Breast epithelium (tissue), 4 donors: ENCODE measurements at regions of chr5 and their contacts with region 1.

Region 1: GRCh38 chr5:64292611-64293215 is 127.1 kb downstream of the RNF180 start:
- DNase-seq: no peak
- H3K4me3 ChIP-seq: no peak overlapping the region
- H3K27ac ChIP-seq: no peak overlapping the region
- H3K4me1 ChIP-seq: no peaks in the 10 kb centered on the region
- H3K27me3 ChIP-seq: no peaks in the 10 kb centered on the region
- CTCF ChIP-seq: no peak
- POLR2A ChIP-seq: no peak

Region 2: GRCh38 chr5:64339776-64340175 is 47.1 kb after region 1 on chr5:
- intact Hi-C with region 1: loop called (anchors 5 kb)
- DNase-seq: no peak
- H3K4me3 ChIP-seq: no peak overlapping the region
- H3K27ac ChIP-seq: no peak overlapping the region
- H3K4me1 ChIP-seq: no peaks in the 10 kb centered on the region
- H3K27me3 ChIP-seq: no peaks in the 10 kb centered on the region
- CTCF ChIP-seq: no peak
- POLR2A ChIP-seq: no peak